Activated T-helper 1 cell treated with anti-CD3 and anti-CD28 coated beads, Interleukin-12 subunit alpha, Interleukin-12 subunit beta, Interleukin-2, Interleukin-4 antibody, amounts not matched to agents 30 ng/mL and 10 ng/mL and 1 ng/mL, durations not matched to agents 14 hours and 24 hours and 36 hours (primary cell): ENCODE measurements at regions of chr16 and their contacts with region 1.

Region 1: GRCh38 chr16:25111403-25112166 is at the start of gene LCMT1:
- DNase-seq: peak; percentile 91
- H3K4me3 Mint-ChIP-seq: peak within 1 kb of the TSS; percentile 98
- H3K27ac Mint-ChIP-seq: peak within 1 kb of the TSS; percentile 98
- H3K4me1 Mint-ChIP-seq: peaks cover 60% of the 10 kb centered on the region
- H3K27me3 Mint-ChIP-seq: peaks cover 1% of the 10 kb centered on the region
- total RNA-seq, gene LCMT1: 39.1 and 40.1 TPM in 2 replicates

Region 2: GRCh38 chr16:24729362-24729984 is 382.1 kb before region 1 on chr16 and contains the start of gene TNRC6A:
- intact Hi-C with region 1: loop called (anchors 5 kb)
- DNase-seq: peak; percentile 76
- H3K4me3 Mint-ChIP-seq: peak within 1 kb of the TSS; percentile 92
- H3K27ac Mint-ChIP-seq: peak within 1 kb of the TSS; percentile 96
- H3K4me1 Mint-ChIP-seq: peaks cover 42% of the 10 kb centered on the region
- H3K27me3 Mint-ChIP-seq: no peaks in the 10 kb centered on the region
- total RNA-seq, gene TNRC6A: 57.8 and 60.9 TPM in 2 replicates

Region 3: DNA sequence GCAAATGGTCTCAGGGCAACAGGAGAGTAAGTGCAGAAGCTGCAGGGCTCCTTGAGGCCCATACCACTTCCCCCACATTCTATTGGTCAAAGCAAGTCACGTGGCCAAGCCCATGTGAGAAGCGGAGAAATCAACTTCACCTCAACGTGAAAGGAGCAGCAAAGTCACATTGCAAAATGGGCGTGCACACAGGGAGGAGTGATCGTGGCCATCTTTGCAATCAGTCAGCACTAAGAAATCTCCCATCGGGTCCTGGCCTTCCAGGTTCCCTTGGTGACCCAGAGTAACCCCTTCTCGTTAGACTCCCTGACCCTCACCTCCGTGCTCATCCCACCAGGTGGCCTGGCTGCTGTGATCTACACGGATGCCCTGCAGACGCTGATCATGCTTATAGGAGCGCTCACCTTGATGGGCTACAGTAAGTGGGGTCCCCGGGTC is 227.9 kb before region 1 on chr16:
- intact Hi-C with region 1: no loop called
- DNase-seq: no peak
- H3K4me3 Mint-ChIP-seq: no peak overlapping the region
- H3K27ac Mint-ChIP-seq: no peak overlapping the region
- H3K4me1 Mint-ChIP-seq: no peaks in the 10 kb centered on the region
- H3K27me3 Mint-ChIP-seq: peaks cover 1% of the 10 kb centered on the region

Region 4: DNA sequence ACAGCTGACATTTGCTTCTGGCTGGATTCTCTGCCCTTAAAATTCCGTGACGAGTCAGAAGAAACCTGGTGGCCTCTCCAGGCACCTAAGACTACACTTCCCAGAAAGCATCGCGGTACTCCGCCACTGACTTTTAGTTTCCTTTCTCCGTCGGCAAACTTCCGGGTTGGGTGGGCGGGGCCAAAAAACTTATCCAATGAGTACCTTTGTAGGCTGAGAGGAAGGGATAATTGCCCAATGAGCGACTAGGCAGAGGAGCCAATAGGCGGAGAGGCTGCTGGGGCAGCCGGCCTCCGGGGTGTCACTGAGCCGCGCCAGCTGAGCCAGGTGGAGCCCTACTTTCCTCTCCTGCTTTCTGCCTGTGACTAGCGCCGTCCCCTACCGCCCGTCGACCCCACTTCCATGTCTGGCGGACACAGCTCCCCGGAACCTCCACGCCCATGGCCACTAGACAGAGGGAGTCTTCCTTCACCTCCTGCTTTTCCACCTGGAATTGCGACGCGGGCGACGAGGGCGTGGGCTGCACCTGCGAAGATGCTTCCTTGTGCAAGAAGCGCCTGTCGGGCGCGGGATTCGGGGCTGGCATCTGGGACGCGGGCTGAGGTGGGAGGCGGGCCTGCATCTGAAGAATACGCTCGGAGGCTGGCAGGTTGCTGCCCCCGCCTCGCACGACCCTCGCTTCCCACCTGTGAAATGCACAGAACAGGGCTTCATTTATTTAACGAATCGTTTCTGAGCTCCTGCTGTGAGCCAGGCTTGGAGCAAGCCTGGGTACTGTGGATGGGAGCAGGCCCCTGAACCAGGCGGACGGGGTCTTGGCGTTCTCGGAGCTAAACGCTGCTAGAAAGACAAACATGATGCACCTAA is 79.9 kb before region 1 on chr16:
- intact Hi-C with region 1: loop called (anchors 1 kb)
- DNase-seq: peak; percentile 88
- H3K4me3 Mint-ChIP-seq: peak overlapping the region; percentile 85
- H3K27ac Mint-ChIP-seq: peak overlapping the region; percentile 98
- H3K4me1 Mint-ChIP-seq: peaks cover 43% of the 10 kb centered on the region
- H3K27me3 Mint-ChIP-seq: peaks cover under 1% of the 10 kb centered on the region

Region 5: GRCh38 chr16:25066747-25067631 is 44.6 kb before region 1 on chr16:
- intact Hi-C with region 1: loop called (anchors 1 kb)
- DNase-seq: peak; percentile 80
- H3K4me3 Mint-ChIP-seq: peak overlapping the region; percentile 89
- H3K27ac Mint-ChIP-seq: peak overlapping the region; percentile 88
- H3K4me1 Mint-ChIP-seq: peaks cover 40% of the 10 kb centered on the region
- H3K27me3 Mint-ChIP-seq: peaks cover 5% of the 10 kb centered on the region

Region 6: GRCh38 chr16:25126820-25127232 is 15.2 kb after region 1 on chr16:
- intact Hi-C with region 1: loop called (anchors 1 kb)
- DNase-seq: peak; percentile 6
- H3K4me3 Mint-ChIP-seq: no peak overlapping the region
- H3K27ac Mint-ChIP-seq: peak overlapping the region; percentile 80
- H3K4me1 Mint-ChIP-seq: peaks cover 29% of the 10 kb centered on the region
- H3K27me3 Mint-ChIP-seq: no peaks in the 10 kb centered on the region

Region 7: DNA sequence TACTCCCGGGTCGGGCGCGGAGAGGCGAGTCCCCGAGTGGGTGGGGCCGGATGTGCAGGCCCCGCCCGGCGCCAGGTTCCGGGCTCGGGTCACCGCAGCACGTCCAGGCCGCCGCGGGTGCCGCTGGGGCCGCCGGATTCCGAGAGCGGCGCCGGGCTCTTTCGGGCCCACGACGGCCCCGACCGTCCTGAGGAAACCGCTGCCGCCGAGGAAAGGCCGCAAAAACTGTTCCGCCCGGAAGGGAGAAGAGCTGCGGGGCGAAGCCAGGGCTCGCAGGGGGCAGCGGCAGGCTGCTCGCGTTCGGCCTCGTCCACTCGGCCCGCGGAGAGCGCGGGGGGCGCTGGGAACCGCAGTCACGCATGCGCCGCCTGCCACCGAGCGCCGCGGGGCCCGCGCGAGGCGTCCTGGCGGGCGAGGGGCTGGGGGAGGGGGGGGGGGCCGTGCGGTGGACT is 145.9 kb after region 1 on chr16 and contains the start of gene ZKSCAN2:
- intact Hi-C with region 1: loop called (anchors 1 kb)
- DNase-seq: peak; percentile 83
- H3K4me3 Mint-ChIP-seq: peak within 1 kb of the TSS; percentile 91
- H3K27ac Mint-ChIP-seq: peak within 1 kb of the TSS; percentile 97
- H3K4me1 Mint-ChIP-seq: peaks cover 53% of the 10 kb centered on the region
- H3K27me3 Mint-ChIP-seq: peaks cover 2% of the 10 kb centered on the region
- total RNA-seq, gene ZKSCAN2: 6.1 and 6.4 TPM in 2 replicates

Region 8: GRCh38 chr16:25434064-25434463 is 322.5 kb after region 1 on chr16:
- intact Hi-C with region 1: no loop called
- DNase-seq: no peak
- H3K4me3 Mint-ChIP-seq: no peak overlapping the region
- H3K27ac Mint-ChIP-seq: no peak overlapping the region
- H3K4me1 Mint-ChIP-seq: no peaks in the 10 kb centered on the region
- H3K27me3 Mint-ChIP-seq: no peaks in the 10 kb centered on the region